Lower leg skin (tissue), 4 donors: ENCODE measurements at regions of chr9 and their contacts with region 1.

Region 1: DNA sequence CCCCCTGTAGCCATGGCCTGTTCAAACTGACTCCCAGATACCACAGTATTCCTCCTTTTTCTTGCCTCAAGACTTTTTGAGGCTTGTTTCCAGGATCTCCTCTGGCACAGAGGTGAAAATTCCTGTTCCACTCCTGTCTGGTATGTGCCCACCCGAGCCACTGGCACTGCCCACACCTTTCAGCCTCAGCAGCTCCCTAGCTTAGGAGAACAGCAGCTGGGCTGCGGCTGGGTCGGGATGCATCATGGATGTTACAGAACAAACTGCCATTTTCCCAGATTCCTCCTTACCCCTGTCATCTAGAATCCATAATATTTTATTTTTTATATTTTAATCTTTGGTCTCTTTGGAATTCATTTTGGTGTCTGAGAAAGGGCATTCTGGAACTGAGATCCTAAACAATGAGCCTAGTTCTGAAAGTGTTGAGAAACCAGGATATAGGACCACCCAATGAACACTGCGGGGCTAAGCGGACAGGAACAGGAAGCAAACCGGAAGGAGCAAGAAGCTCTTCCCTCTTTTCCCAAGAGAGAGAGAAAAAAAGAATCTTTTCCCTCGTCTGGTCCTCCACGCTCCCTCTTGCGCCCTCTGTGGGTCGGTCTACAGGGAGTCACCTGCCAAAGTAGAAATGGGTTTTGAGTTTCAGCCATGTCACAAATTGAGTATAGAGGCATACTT is 12.5 kb downstream of the OR2S2 start:
- DNase-seq: peak; percentile 67 to 95
- H3K4me3 ChIP-seq: no peak overlapping the region
- CTCF ChIP-seq: peak in 1 of 3 donors; percentile 32
- POLR2A ChIP-seq: no peak

Region 2: DNA sequence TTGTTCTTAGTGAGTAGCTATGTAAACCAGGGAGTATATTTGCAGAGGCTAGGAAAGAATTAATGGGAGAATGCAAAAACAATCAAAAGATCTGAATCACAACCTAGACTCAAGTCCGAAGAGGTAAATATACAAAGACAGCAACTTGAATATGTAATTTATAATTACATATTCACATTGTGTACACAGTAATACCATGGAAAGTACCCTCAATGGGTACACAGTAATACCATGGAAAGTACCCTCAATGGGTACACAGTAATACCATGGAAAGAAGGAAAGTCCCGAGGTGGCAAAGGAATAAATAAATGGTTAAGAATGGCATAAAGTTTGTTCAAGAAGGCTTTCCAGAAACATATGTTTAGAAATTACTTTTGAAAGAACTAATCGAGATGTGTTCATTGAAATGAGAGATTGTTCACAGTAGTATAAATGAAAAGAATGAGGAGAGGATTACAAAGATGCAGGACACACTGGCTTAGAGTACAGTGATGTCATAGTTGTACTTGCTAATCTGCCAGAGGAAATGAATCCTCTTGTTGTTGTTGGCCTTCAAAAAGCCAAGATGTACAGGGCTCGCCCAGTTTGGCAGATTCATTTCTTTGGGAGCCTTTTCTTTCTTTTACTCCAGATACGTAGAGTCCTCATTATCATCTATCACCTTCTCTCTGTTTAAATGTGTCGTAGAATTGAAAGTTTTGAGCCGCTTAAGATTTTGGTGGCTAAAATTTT is 667.7 kb before region 1 on chr9:
- intact Hi-C with region 1: no loop called
- DNase-seq: no peak
- H3K4me3 ChIP-seq: no peak overlapping the region
- CTCF ChIP-seq: no peak
- POLR2A ChIP-seq: no peak

Region 3: GRCh38 chr9:35790385-35791296 is 154.8 kb before region 1 on chr9:
- intact Hi-C with region 1: loop called (anchors 5 kb)
- DNase-seq: peak; percentile 65 to 93
- H3K4me3 ChIP-seq: no peak overlapping the region
- CTCF ChIP-seq: peak in 1 of 3 donors; percentile 68
- POLR2A ChIP-seq: no peak

Region 4: DNA sequence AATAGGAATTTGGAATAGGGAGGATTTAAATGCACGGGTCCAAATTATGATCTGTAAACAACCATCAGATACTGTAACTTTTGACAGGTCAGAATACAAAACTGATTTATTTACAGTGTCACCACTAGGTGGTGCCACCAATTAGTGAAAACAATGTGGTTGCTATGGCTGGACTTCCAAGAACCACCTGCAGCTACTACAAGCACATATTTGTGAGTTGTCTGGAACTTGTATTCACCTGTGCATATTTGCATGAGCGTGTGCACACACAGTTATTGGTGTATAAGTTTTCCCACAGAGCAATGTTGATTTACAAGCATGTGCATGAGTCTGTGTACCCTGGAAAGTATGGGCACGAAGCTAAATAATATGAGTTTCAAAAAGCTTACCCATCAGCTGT is 42.4 kb before region 1 on chr9:
- intact Hi-C with region 1: loop called (anchors 2 kb)
- DNase-seq: no peak
- H3K4me3 ChIP-seq: no peak overlapping the region
- CTCF ChIP-seq: peak in 1 of 3 donors; percentile 77
- POLR2A ChIP-seq: no peak

Region 5: DNA sequence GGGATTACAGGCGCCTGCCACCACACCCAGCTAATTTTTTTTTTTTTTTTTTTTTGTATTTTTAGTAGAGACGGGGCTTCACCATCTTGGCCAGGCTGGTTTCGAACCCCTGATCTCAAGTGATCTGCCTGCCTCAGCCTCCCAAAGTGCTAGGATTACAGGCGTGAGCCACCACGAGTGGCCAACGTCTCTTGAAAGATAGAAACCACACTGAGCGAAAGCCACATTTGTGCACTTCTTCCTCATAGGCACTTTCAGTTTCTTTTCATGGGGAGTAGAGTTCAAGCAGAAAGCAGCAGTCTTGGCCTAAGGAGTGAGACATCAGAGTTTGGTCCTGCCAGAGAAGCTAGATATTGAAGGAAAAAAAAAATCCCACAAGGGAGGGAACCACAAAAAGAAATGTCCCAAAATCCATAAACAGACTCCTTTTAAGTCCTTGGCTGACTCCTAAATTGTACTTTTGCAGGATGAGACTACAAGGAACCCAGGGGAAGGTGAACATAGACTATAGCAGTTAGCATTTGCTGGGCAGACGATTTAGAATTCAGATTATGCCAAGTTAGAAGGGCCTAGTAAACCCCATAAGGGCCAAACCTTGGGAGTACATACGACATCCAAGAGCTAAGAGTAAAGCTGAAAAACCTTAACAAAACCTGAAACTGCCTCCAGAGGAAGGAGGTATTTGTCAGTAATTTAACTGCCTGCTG is 147.2 kb after region 1 on chr9:
- intact Hi-C with region 1: no loop called
- DNase-seq: no peak
- H3K4me3 ChIP-seq: no peak overlapping the region
- CTCF ChIP-seq: no peak
- POLR2A ChIP-seq: no peak